ENCODE measurements at regions of chr17 and their contacts with region 1.

Region 1: DNA sequence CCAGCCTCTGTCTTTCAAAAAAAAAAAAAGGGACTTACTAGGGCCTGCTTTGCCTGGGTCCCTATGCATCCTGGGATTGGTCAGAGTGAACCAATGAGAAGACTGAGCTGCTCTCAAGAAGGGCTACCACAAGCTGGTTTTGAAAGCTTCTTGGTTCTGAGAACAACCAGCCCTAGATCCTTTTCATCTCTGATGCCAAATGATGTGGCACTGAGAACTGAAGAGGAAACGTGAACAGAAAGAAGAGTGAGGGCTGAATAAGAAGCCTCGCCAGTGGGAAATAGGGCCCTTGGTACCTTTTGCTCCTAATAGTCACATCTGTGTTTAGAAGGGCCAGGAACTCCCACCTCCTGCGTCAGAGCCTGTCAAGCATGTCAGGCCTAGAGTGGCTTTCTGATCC is 10.7 kb downstream of the TACO1 start:
- DNase-seq: no peak
- ATAC-seq: peak; percentile 46
- H3K4me3 Mint-ChIP-seq: no peak overlapping the region
- H3K27ac Mint-ChIP-seq: no peak overlapping the region
- H3K4me1 Mint-ChIP-seq: no peaks in the 10 kb centered on the region
- H3K27me3 Mint-ChIP-seq: no peaks in the 10 kb centered on the region
- CTCF ChIP-seq: no peak

Region 2: DNA sequence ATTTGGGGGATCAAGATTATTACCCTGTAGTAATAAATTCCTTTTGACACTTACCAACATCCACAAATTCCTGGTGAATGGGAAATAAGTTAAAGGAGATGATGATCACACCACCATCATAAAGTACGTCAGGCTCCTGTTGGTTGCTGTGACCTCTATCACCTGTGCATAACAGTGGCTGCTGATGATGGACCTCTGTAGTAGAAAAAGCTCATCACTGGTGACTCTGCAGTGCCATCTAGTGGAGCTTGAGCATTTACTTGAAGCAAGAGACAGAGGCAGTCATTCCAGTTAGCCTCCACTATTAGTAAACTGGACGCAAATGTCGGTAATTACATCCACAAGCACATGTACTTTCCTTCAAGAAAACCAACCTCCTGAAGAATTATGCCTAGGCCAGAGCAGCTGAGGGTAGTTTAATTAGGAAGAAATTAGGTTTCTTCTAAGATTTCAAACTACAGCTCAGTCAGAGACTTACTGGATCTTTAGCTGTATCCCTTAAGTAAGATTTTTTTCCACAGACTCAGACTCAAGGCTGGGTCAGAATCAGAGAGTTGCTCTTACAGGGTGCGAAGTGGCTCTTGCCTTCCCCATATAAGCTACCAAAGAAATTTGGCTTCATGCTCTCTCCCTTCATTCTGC is 204.5 kb before region 1 on chr17:
- CTCF ChIA-PET with region 1: interaction called, 12 read pairs
- POLR2A ChIA-PET with region 1: no interaction called
- DNase-seq: peak; percentile 75
- ATAC-seq: peak; percentile 93
- H3K4me3 Mint-ChIP-seq: no peak overlapping the region
- H3K27ac Mint-ChIP-seq: no peak overlapping the region
- H3K4me1 Mint-ChIP-seq: peaks cover 2% of the 10 kb centered on the region
- H3K27me3 Mint-ChIP-seq: no peaks in the 10 kb centered on the region
- CTCF ChIP-seq: peak; percentile 72

Region 3: GRCh38 chr17:63478791-63479494 is 132.4 kb before region 1 on chr17:
- CTCF ChIA-PET with region 1: interaction called, 23 read pairs
- POLR2A ChIA-PET with region 1: no interaction called
- DNase-seq: peak; percentile 92
- ATAC-seq: peak; percentile 75
- H3K4me3 Mint-ChIP-seq: peak overlapping the region; percentile 14; the same call in 1 of the 2 replicates
- H3K27ac Mint-ChIP-seq: no peak overlapping the region
- H3K4me1 Mint-ChIP-seq: peaks cover 32% of the 10 kb centered on the region
- H3K27me3 Mint-ChIP-seq: peaks cover 28% of the 10 kb centered on the region
- CTCF ChIP-seq: peak; percentile 52; the same call in 1 of the 2 replicates

Region 4: DNA sequence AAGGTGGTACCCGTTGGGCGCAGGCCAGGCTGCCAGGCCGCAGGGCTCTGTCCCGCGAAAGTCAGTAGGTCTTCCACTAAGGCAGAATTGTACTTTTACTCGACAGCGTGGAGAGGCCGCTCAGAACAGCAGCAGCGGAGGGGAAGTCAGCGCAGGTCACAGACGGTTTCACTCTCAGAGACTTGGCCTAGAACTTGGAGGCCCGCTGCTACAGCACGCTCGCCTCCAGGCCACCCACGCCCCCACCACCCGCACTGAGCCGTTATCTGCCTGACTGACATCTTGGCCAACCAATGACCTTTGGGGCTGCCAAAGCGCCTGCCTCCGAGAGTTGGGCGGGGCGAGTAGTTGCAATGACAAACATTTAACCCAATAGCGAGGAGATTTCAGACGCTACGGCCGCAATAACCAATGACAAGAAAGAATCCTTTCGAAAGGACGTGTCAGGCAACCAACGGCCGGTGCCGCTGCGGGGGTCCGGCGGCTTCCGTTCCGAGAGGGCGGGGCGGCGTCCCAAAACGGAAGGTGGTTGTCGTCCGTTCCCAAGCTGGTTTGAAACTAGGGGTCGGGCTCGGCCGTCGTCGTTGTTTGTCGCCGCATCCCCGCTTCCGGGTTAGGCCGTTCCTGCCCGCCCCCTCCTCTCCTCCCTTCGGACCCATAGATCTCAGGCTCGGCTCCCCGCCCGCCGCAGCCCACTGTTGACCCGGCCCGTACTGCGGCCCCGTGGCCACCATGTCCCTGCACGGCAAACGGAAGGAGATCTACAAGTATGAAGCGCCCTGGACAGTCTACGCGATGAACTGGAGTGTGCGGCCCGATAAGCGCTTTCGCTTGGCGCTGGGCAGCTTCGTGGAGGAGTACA is 61.2 kb before region 1 on chr17 and contains the start of gene DCAF7:
- CTCF ChIA-PET with region 1: interaction called, 12 read pairs
- POLR2A ChIA-PET with region 1: no interaction called
- DNase-seq: peak; percentile 99
- ATAC-seq: peak; percentile 92
- H3K4me3 Mint-ChIP-seq: peak within 1 kb of the TSS; percentile 97
- H3K27ac Mint-ChIP-seq: peak within 1 kb of the TSS; percentile 98
- H3K4me1 Mint-ChIP-seq: peaks cover 18% of the 10 kb centered on the region
- H3K27me3 Mint-ChIP-seq: no peaks in the 10 kb centered on the region
- CTCF ChIP-seq: no peak
- total RNA-seq, gene DCAF7: 91.5 to 99.8 TPM (median 97.8 TPM) in 3 replicates

Region 5: DNA sequence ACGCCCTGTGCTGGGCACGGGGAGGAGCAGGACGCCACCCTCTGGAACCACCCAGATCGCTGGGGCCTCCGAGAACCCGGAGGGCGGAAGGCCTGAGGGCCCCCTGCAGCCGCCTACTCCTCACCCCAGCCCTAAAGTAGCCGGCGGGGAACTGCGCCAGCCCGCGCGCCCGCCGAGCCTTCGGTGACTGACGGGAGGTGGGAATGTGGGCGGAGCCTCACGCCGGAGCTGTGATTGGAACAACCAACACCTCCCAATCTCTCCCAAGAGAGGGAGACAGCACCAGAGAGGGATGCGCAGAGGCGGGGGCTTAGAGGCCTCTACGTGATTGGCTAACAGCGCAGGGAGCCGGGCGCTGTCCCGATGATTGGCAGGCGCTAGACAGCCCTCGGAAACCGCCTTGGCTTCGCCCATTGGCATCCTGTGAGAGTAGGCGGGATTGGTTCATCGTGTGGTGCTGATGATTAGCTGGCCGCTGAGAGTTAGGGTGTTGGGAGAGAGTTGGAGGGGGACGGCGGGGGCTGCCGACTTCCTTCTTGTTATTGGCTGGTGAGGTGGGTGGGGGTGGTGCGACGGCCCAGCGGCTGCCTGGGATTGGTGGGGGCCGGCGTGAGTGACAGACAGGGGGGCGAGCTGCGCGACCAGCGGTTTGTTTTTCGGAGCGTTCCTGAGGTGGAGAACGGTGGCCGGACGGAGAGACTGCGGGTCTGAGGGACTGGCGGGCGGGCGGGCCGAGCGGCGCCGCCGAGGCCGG is 10.6 kb after region 1 on chr17 and contains the start of gene MAP3K3:
- CTCF ChIA-PET with region 1: interaction called, 67 read pairs
- POLR2A ChIA-PET with region 1: interaction called, 4 read pairs
- DNase-seq: peak; percentile 99
- ATAC-seq: peak; percentile 91
- H3K4me3 Mint-ChIP-seq: peak within 1 kb of the TSS; percentile 98
- H3K27ac Mint-ChIP-seq: peak within 1 kb of the TSS; percentile 91
- H3K4me1 Mint-ChIP-seq: peaks cover 25% of the 10 kb centered on the region
- H3K27me3 Mint-ChIP-seq: no peaks in the 10 kb centered on the region; the same call in 1 of the 2 replicates
- CTCF ChIP-seq: no peak
- total RNA-seq, gene MAP3K3: 21.8 to 25.7 TPM (median 22.5 TPM) in 3 replicates

Region 6: GRCh38 chr17:63714547-63715277 is 103.4 kb after region 1 on chr17:
- CTCF ChIA-PET with region 1: interaction called, 11 read pairs
- POLR2A ChIA-PET with region 1: no interaction called
- DNase-seq: no peak
- ATAC-seq: no peak
- H3K4me3 Mint-ChIP-seq: no peak overlapping the region
- H3K27ac Mint-ChIP-seq: no peak overlapping the region
- H3K4me1 Mint-ChIP-seq: no peaks in the 10 kb centered on the region
- H3K27me3 Mint-ChIP-seq: no peaks in the 10 kb centered on the region
- CTCF ChIP-seq: no peak